ENCODE measurements at regions of chr16 and their contacts with region 1.

Region 1: GRCh38 chr16:17467923-17468540 is 2.7 kb downstream of the XYLT1 start:
- DNase-seq: peak; percentile 81 to 84
- ATAC-seq: peak; percentile 67
- H3K4me3 ChIP-seq: no peak overlapping the region
- H3K27ac ChIP-seq: no peak overlapping the region
- H3K4me1 ChIP-seq: no peaks in the 10 kb centered on the region
- H3K27me3 ChIP-seq: no peaks in the 10 kb centered on the region

Region 2: GRCh38 chr16:17194190-17194780 is 273.7 kb before region 1 on chr16:
- intact Hi-C with region 1: loop called (anchors 5 to 10 kb)
- DNase-seq: peak; percentile 73 to 87
- ATAC-seq: peak; percentile 77
- H3K4me3 ChIP-seq: no peak overlapping the region
- H3K27ac ChIP-seq: no peak overlapping the region
- H3K4me1 ChIP-seq: no peaks in the 10 kb centered on the region
- H3K27me3 ChIP-seq: no peaks in the 10 kb centered on the region

Region 3: GRCh38 chr16:17277977-17278381 is 190.1 kb before region 1 on chr16:
- intact Hi-C with region 1: loop called (anchors 5 kb)
- DNase-seq: peak in 1 of 2 donors; percentile 53
- ATAC-seq: no peak
- H3K4me3 ChIP-seq: no peak overlapping the region
- H3K27ac ChIP-seq: no peak overlapping the region
- H3K4me1 ChIP-seq: no peaks in the 10 kb centered on the region
- H3K27me3 ChIP-seq: no peaks in the 10 kb centered on the region

Region 4: DNA sequence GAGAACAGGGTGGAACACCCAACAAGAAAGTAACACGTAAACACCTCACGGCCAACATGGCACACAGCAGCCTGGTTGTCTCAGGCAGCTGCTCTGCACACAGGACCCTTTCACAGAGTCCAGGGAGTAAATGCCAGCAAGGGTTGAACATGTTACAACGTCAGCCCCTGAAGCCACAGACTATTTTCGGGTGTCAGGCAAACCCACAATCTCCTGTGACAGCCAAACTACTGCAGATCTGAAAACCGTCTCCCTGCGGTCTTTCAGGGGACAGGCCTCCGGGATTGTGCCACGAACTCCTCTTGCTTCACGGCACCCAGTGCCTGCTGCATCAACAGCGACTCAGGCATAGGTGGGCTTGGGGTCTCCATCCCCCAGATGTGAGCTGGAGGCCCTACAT is 125.0 kb before region 1 on chr16:
- intact Hi-C with region 1: loop called in 1 of 2 experiments (anchors 10 kb)
- DNase-seq: no peak
- ATAC-seq: no peak
- H3K4me3 ChIP-seq: no peak overlapping the region
- H3K27ac ChIP-seq: no peak overlapping the region
- H3K4me1 ChIP-seq: no peaks in the 10 kb centered on the region
- H3K27me3 ChIP-seq: no peaks in the 10 kb centered on the region

Region 5: GRCh38 chr16:17395849-17396480 is 72.1 kb before region 1 on chr16:
- intact Hi-C with region 1: no loop called
- DNase-seq: no peak
- ATAC-seq: peak; percentile 37
- H3K4me3 ChIP-seq: no peak overlapping the region
- H3K27ac ChIP-seq: peak overlapping the region in 1 of 2 donors; percentile 76
- H3K4me1 ChIP-seq: peaks cover 0 to 2% of the 10 kb centered on the region in 2 donors
- H3K27me3 ChIP-seq: no peaks in the 10 kb centered on the region

Region 6: GRCh38 chr16:17416461-17417311 is 51.3 kb before region 1 on chr16:
- intact Hi-C with region 1: loop called in 1 of 2 experiments (anchors 5 kb)
- DNase-seq: peak in 1 of 2 donors; percentile 63
- ATAC-seq: peak; percentile 5
- H3K4me3 ChIP-seq: no peak overlapping the region
- H3K27ac ChIP-seq: no peak overlapping the region
- H3K4me1 ChIP-seq: peaks cover 0 to 2% of the 10 kb centered on the region in 2 donors
- H3K27me3 ChIP-seq: no peaks in the 10 kb centered on the region

Region 7: GRCh38 chr16:17544785-17545184 is 76.8 kb after region 1 on chr16:
- intact Hi-C with region 1: no loop called
- DNase-seq: no peak
- ATAC-seq: no peak
- H3K4me3 ChIP-seq: no peak overlapping the region
- H3K27ac ChIP-seq: no peak overlapping the region
- H3K4me1 ChIP-seq: no peaks in the 10 kb centered on the region
- H3K27me3 ChIP-seq: peaks cover 0 to 1% of the 10 kb centered on the region in 2 donors